ENCODE measurements at regions of chr7 and their contacts with region 1.

Region 1: GRCh38 chr7:100132697-100133151 is 6.0 kb downstream of the MBLAC1 start:
- DNase-seq: peak; percentile 81
- CTCF ChIP-seq: peak; percentile 97

Region 2: DNA sequence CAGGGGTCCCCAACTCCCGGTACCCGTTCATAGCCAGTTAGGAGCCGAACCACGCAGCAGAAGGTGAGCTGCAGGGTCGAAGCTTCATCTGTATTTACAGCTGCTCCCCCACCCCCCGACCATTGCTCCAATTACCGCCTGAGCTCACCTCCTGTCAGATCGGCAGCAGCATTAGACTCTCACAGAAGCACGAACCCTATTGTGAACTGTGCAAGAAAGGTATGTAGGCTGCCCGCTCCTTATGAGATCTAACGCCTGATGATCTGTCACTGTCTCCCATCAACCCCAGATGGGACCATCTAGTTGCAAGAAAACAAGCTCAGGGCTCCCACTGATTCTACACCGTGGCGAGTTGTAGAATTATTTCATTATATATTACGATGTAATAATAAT is 142.3 kb before region 1 on chr7:
- CTCF ChIA-PET with region 1: interaction called, 54 read pairs
- POLR2A ChIA-PET with region 1: no interaction called
- DNase-seq: no peak
- CTCF ChIP-seq: no peak

Region 3: GRCh38 chr7:100011516-100011915 is 121.2 kb before region 1 on chr7:
- CTCF ChIA-PET with region 1: no interaction called
- POLR2A ChIA-PET with region 1: no interaction called
- DNase-seq: no peak
- CTCF ChIP-seq: no peak

Region 4: DNA sequence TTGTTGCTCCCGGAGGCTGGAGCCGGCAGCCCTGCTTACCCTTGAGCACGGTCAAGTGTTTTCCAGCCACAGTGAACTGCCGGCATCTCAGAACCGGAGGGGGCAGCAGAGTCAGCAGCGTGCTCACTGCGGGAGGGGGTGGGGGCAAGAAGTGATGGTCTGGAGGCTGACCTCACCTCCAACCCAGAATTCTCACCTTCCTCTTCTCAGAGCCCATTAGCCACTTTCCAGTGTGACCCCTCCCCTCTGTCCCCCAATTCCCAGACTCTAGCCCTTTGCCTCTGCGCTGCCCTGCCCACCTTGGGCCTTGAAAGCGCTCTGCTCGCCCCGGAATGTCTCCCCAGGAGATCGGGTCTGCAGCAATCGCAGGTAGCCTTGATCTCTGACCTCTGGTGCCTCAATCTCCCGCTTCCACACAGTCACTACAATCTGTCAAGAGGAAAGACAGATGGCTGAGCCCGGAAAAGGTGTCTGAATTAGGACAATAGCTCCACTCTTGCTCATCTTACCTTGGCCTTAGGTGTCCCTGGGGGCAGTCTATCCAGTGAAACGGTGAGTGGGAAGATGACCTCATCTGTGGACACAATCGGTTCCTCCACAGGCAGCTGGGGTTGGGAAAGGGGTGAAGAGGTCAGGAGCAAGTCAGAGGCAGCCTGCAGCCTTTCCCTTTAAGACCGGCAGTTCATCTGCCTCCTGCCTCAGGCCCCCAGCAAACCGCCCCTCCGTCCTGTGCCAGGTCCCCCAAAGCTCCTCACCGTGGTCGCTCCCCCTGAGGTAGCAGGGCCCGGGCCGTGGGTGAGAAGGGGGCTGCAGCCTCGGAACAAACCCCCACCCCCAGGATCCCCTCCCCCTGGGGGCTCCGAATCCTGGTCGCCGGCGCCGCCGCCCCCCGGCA is 24.9 kb after region 1 on chr7:
- CTCF ChIA-PET with region 1: interaction called, 24 read pairs
- POLR2A ChIA-PET with region 1: no interaction called
- DNase-seq: peak; percentile 41
- CTCF ChIP-seq: no peak

Region 5: GRCh38 chr7:100208911-100209408 is 76.2 kb after region 1 on chr7:
- CTCF ChIA-PET with region 1: interaction called, 14 read pairs
- POLR2A ChIA-PET with region 1: no interaction called
- DNase-seq: peak; percentile 75
- CTCF ChIP-seq: no peak

Region 6: GRCh38 chr7:100342765-100343164 is 210.0 kb after region 1 on chr7:
- CTCF ChIA-PET with region 1: interaction called, 22 read pairs
- POLR2A ChIA-PET with region 1: no interaction called
- DNase-seq: no peak
- CTCF ChIP-seq: no peak

Measured in GM10248 (cell line).